Heart left ventricle (tissue), 16 donors: ENCODE measurements at regions of chr4 and their contacts with region 1.

Region 1: GRCh38 chr4:39067451-39067850 is 5.4 kb downstream of the KLHL5 start:
- DNase-seq: no peak
- ATAC-seq: no peak
- H3K4me3 ChIP-seq: no peak overlapping the region
- H3K27ac ChIP-seq: no peak overlapping the region
- H3K4me1 ChIP-seq: peaks cover 0 to 14% (median 0%) of the 10 kb centered on the region in 12 donors
- H3K27me3 ChIP-seq: no peaks in the 10 kb centered on the region
- CTCF ChIP-seq: no peak
- POLR2A ChIP-seq: no peak

Region 2: GRCh38 chr4:39114436-39114835 is 47.0 kb after region 1 on chr4:
- intact Hi-C with region 1: no loop called
- DNase-seq: no peak
- ATAC-seq: no peak
- H3K4me3 ChIP-seq: no peak overlapping the region
- H3K27ac ChIP-seq: no peak overlapping the region
- H3K4me1 ChIP-seq: peaks cover 0 to 13% (median 0%) of the 10 kb centered on the region in 12 donors
- H3K27me3 ChIP-seq: no peaks in the 10 kb centered on the region
- CTCF ChIP-seq: no peak
- POLR2A ChIP-seq: no peak

Region 3: GRCh38 chr4:39134683-39135319 is 67.3 kb after region 1 on chr4:
- intact Hi-C with region 1: no loop called
- DNase-seq: no peak
- ATAC-seq: peak in 1 of 4 donors; percentile 23
- H3K4me3 ChIP-seq: no peak overlapping the region
- H3K27ac ChIP-seq: no peak overlapping the region
- H3K4me1 ChIP-seq: peaks cover 0 to 8% (median 1%) of the 10 kb centered on the region in 12 donors
- H3K27me3 ChIP-seq: no peaks in the 10 kb centered on the region
- CTCF ChIP-seq: no peak
- POLR2A ChIP-seq: no peak

Region 4: GRCh38 chr4:39255266-39255665 is 187.8 kb after region 1 on chr4:
- intact Hi-C with region 1: loop called in 1 of 10 experiments (anchors 5 kb)
- DNase-seq: no peak
- ATAC-seq: no peak
- H3K4me3 ChIP-seq: no peak overlapping the region
- H3K27ac ChIP-seq: no peak overlapping the region
- H3K4me1 ChIP-seq: no peaks in the 10 kb centered on the region
- H3K27me3 ChIP-seq: no peaks in the 10 kb centered on the region
- CTCF ChIP-seq: no peak
- POLR2A ChIP-seq: no peak